Posterior cingulate gyrus (tissue), 11 donors: ENCODE measurements at regions of chr1 and their contacts with region 1.

Region 1: DNA sequence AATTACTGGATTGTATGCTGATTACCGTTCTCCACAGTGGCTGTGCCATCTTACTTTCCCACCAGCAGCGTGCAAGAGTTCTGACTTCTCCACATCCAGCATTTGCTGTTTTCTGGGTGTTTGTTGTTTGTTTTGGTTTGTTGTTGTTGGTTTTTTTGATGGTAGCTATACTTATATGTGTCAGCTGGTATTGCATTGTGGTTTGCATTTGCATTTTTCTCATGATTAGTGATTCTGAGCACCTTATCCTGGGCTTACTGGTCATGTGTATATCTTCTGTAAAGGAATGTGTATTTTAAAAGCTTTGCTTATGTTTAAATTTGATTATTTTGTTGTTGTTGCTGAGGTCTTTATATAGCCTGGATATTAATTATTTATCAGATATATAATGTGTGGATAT is 66.9 kb upstream of the MAP1LC3C start:
- DNase-seq: no peak

Region 2: DNA sequence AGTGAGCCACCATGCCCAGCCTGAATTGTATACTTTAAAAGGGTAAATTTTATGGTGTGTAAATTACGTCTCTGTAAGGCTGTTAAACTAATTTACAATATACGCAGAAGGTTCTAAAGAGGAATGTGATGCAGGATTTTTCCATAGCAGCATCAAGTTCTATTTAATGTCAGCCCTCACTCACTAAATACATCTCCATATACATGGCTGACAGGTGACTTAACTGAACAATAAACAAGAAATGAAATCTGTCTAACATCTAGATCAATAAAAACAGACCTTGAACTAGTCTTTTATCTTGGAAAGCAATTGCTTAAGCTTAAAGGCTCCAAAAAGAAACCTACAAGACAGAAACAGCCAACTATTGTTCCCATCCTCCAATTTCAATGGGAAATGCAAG is 54.6 kb after region 1 on chr1:
- intact Hi-C with region 1: loop called (anchors 10 kb)
- DNase-seq: no peak